Natural killer cell (primary cell): ENCODE measurements at regions of chr7 and their contacts with region 1.

Region 1: GRCh38 chr7:100215895-100216294 is 3.9 kb upstream of the PVRIG start:
- DNase-seq: no peak
- ATAC-seq: no peak
- H3K4me3 ChIP-seq: no peak overlapping the region
- H3K4me3 Mint-ChIP-seq: no peak overlapping the region
- H3K27ac ChIP-seq: no peak overlapping the region
- H3K27ac Mint-ChIP-seq: peak overlapping the region; percentile 23 to 64
- H3K4me1 ChIP-seq: peaks cover 43% of the 10 kb centered on the region
- H3K4me1 Mint-ChIP-seq: peaks cover 41 to 44% of the 10 kb centered on the region in 2 donors
- H3K27me3 ChIP-seq: no peaks in the 10 kb centered on the region
- H3K27me3 Mint-ChIP-seq: no peaks in the 10 kb centered on the region
- CTCF ChIP-seq: no peak

Region 2: DNA sequence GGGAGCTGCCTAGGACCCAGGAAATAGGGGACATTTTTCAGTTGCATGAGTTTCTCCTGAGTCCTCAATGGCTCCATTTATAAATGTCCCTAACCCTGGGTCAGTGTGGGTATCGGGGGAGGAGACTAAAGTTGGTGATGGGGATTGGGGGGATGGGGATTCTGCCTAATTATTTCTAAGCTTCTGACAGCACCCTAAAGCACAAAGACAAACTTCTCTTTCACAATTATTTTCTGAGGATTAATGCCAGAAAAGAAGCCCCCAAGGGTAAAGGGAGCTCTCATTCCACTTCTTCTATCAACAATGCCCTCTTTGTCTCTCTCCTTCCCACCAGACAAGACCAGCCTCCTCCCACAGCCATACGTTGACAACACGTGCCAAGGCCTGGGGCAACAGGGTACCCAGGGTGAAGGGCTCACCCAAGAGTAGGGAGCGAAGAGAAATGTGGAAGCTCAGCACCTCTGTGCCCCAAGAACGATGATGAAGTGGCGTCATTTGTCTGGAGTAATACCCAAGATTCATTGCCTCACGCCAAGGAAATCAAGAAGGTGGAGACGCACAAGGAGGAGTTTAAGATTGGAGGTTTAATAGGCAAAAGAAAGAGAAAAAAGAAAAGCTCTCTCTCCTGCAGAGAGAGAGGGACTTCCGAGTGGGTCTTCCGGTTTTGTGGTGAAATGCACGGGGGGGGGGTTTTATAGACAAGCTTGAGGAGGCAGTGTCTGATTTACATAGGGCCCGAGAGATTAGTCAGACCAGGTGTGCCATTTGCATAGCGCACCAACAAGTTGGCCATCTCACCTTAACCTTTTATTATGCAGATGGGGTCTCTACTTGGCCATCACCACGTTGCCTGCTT is 272.0 kb before region 1 on chr7:
- intact Hi-C with region 1: no loop called
- DNase-seq: peak in 1 of 2 donors; percentile 10
- ATAC-seq: no peak
- H3K4me3 ChIP-seq: no peak overlapping the region
- H3K4me3 Mint-ChIP-seq: no peak overlapping the region
- H3K27ac ChIP-seq: no peak overlapping the region
- H3K27ac Mint-ChIP-seq: no peak overlapping the region
- H3K4me1 ChIP-seq: peaks cover 5% of the 10 kb centered on the region
- H3K4me1 Mint-ChIP-seq: peaks cover 5 to 6% of the 10 kb centered on the region in 2 donors
- H3K27me3 ChIP-seq: peaks cover under 1% of the 10 kb centered on the region
- H3K27me3 Mint-ChIP-seq: peaks cover 33 to 49% of the 10 kb centered on the region in 2 donors
- CTCF ChIP-seq: no peak

Region 3: GRCh38 chr7:100132697-100133151 is 83.2 kb before region 1 on chr7:
- intact Hi-C with region 1: loop called (anchors 5 kb)
- DNase-seq: peak; percentile 44 to 84
- ATAC-seq: peak; percentile 81 to 84 (median 83)
- H3K4me3 ChIP-seq: no peak overlapping the region
- H3K4me3 Mint-ChIP-seq: no peak overlapping the region
- H3K27ac ChIP-seq: no peak overlapping the region
- H3K27ac Mint-ChIP-seq: no peak overlapping the region
- H3K4me1 ChIP-seq: peaks cover 12% of the 10 kb centered on the region
- H3K4me1 Mint-ChIP-seq: peaks cover 9 to 20% of the 10 kb centered on the region in 2 donors
- H3K27me3 ChIP-seq: no peaks in the 10 kb centered on the region
- H3K27me3 Mint-ChIP-seq: peaks cover 0 to 7% of the 10 kb centered on the region in 2 donors
- CTCF ChIP-seq: peak; percentile 79

Region 4: GRCh38 chr7:100147278-100147677 is 68.6 kb before region 1 on chr7:
- intact Hi-C with region 1: no loop called
- DNase-seq: no peak
- ATAC-seq: no peak
- H3K4me3 ChIP-seq: no peak overlapping the region
- H3K4me3 Mint-ChIP-seq: no peak overlapping the region
- H3K27ac ChIP-seq: no peak overlapping the region
- H3K27ac Mint-ChIP-seq: no peak overlapping the region
- H3K4me1 ChIP-seq: peaks cover 20% of the 10 kb centered on the region
- H3K4me1 Mint-ChIP-seq: peaks cover 27 to 29% of the 10 kb centered on the region in 2 donors
- H3K27me3 ChIP-seq: no peaks in the 10 kb centered on the region
- H3K27me3 Mint-ChIP-seq: no peaks in the 10 kb centered on the region
- CTCF ChIP-seq: no peak

Region 5: GRCh38 chr7:100177045-100178001 is 38.6 kb before region 1 on chr7 and contains the starts of genes GPC2 and STAG3:
- intact Hi-C with region 1: loop called (anchors 5 kb)
- DNase-seq: peak; percentile 95 to 97
- ATAC-seq: peak; percentile 89 to 97 (median 89)
- H3K4me3 ChIP-seq: peak within 1 kb of the TSS; percentile 47
- H3K4me3 Mint-ChIP-seq: peak within 1 kb of the TSS; percentile 76
- H3K27ac ChIP-seq: no peak within 1 kb of the TSS
- H3K27ac Mint-ChIP-seq: peak within 1 kb of the TSS; percentile 48 to 60
- H3K4me1 ChIP-seq: peaks cover 27% of the 10 kb centered on the region
- H3K4me1 Mint-ChIP-seq: peaks cover 16 to 31% of the 10 kb centered on the region in 2 donors
- H3K27me3 ChIP-seq: no peaks in the 10 kb centered on the region
- H3K27me3 Mint-ChIP-seq: peaks cover 0 to 3% of the 10 kb centered on the region in 2 donors
- CTCF ChIP-seq: no peak
- total RNA-seq, gene GPC2: 1.9 to 2.4 (median 2.3) TPM
- total RNA-seq, gene STAG3: 5.0 to 5.6 (median 5.5) TPM

Region 6: DNA sequence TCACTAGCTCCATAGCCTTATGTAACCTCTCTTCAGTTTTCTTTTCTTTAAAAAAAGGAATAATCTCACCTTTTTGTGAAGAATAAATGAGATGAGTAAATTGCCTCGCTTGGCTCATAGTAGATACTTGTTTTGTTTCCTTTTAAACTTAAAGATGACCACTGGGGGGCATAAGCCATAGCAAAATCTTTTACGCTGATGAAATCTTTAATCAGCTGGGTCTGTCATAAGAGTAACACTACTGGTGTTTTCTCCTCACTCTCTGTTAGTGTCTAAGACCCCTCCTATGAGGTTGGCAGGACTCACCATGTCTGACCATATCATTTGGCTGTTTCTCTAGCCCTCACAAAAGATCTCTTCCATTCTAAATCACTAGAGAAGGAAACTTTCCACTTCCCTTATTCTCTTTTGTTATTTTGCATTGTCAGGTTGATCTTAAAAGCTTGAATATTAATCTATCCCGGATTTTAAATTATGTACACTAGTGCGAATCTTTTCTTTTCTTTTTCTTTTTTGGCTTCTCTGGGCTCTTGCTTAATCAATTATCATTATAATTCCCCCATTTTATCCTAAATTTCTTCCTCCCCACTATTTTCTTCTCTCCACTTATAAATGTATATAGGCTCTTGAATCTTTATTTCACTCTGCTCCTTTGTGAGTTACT is 25.7 kb before region 1 on chr7:
- intact Hi-C with region 1: loop called (anchors 2 kb)
- DNase-seq: peak in 1 of 2 donors; percentile 76
- ATAC-seq: peak; percentile 71 to 91 (median 72)
- H3K4me3 ChIP-seq: no peak overlapping the region
- H3K4me3 Mint-ChIP-seq: no peak overlapping the region
- H3K27ac ChIP-seq: no peak overlapping the region
- H3K27ac Mint-ChIP-seq: peak overlapping the region in 1 of 2 donors; percentile 25
- H3K4me1 ChIP-seq: peaks cover 4% of the 10 kb centered on the region
- H3K4me1 Mint-ChIP-seq: peaks cover 0 to 7% of the 10 kb centered on the region in 2 donors
- H3K27me3 ChIP-seq: no peaks in the 10 kb centered on the region
- H3K27me3 Mint-ChIP-seq: no peaks in the 10 kb centered on the region
- CTCF ChIP-seq: peak; percentile 61

Region 7: DNA sequence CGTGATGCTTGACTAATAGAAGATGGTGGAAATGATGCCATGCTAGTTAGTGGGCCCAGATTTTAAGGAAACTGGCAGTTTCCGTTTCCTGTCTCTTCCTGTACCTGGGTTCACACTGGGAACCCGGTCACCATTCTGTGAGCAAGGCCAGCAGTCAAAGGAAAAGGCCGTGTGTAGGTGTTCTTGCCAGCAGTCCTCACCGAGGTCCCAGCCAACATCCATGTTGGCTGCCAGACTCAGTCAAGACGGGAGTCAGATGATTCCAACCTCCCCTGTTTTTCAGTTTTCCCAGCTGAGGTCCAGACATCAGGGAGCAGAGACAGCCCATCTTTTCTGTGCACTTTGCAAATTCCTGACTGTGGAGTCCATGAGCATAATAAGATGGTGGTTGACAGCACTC is 126.9 kb after region 1 on chr7:
- intact Hi-C with region 1: loop called (anchors 5 kb)
- DNase-seq: no peak
- ATAC-seq: no peak
- H3K4me3 ChIP-seq: no peak overlapping the region
- H3K4me3 Mint-ChIP-seq: peak overlapping the region; percentile 25
- H3K27ac ChIP-seq: peak overlapping the region; percentile 8
- H3K27ac Mint-ChIP-seq: peak overlapping the region; percentile 86 to 89
- H3K4me1 ChIP-seq: peaks cover 18% of the 10 kb centered on the region
- H3K4me1 Mint-ChIP-seq: peaks cover 25 to 34% of the 10 kb centered on the region in 2 donors
- H3K27me3 ChIP-seq: no peaks in the 10 kb centered on the region
- H3K27me3 Mint-ChIP-seq: no peaks in the 10 kb centered on the region
- CTCF ChIP-seq: no peak